MCF 10A (cell line): ENCODE measurements at regions of chr5 and their contacts with region 1.

Region 1: GRCh38 chr5:41835645-41836044 is 34.6 kb downstream of the OXCT1 start:
- DNase-seq: peak; percentile 70
- H3K4me3 Mint-ChIP-seq: no peak overlapping the region
- H3K27ac Mint-ChIP-seq: no peak overlapping the region
- H3K4me1 Mint-ChIP-seq: no peaks in the 10 kb centered on the region
- H3K27me3 Mint-ChIP-seq: no peaks in the 10 kb centered on the region
- CTCF ChIP-seq: no peak

Region 2: GRCh38 chr5:41410737-41411136 is 424.9 kb before region 1 on chr5:
- CTCF ChIA-PET with region 1: interaction called, 10 read pairs
- POLR2A ChIA-PET with region 1: no interaction called
- intact Hi-C with region 1: no loop called
- DNase-seq: no peak
- H3K4me3 Mint-ChIP-seq: no peak overlapping the region
- H3K27ac Mint-ChIP-seq: no peak overlapping the region
- H3K4me1 Mint-ChIP-seq: peaks cover 36% of the 10 kb centered on the region
- H3K27me3 Mint-ChIP-seq: no peaks in the 10 kb centered on the region
- CTCF ChIP-seq: no peak

Region 3: DNA sequence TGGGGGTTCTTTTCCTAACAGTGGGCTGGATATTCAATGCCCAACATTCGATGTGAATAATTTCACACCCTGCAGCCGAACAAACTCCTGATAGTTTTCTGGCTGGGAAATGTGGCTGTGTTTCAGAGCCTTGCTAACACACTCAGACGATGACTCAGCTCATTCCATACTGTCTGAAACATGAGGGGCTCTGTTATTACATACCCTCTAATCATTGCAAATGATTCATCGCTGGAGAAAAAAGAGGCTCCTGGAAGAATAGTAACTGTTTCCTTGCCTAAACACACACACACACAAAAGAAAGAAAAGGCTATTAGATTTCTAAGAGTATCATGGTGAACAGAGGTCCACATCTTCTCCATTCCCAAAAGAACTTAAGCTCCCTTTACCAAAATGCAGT is 41.2 kb before region 1 on chr5:
- CTCF ChIA-PET with region 1: no interaction called
- POLR2A ChIA-PET with region 1: no interaction called
- intact Hi-C with region 1: loop called (anchors 2 kb)
- DNase-seq: peak; percentile 80
- H3K4me3 Mint-ChIP-seq: no peak overlapping the region
- H3K27ac Mint-ChIP-seq: peak overlapping the region; percentile 79
- H3K4me1 Mint-ChIP-seq: peaks cover 21% of the 10 kb centered on the region
- H3K27me3 Mint-ChIP-seq: no peaks in the 10 kb centered on the region
- CTCF ChIP-seq: no peak

Region 4: DNA sequence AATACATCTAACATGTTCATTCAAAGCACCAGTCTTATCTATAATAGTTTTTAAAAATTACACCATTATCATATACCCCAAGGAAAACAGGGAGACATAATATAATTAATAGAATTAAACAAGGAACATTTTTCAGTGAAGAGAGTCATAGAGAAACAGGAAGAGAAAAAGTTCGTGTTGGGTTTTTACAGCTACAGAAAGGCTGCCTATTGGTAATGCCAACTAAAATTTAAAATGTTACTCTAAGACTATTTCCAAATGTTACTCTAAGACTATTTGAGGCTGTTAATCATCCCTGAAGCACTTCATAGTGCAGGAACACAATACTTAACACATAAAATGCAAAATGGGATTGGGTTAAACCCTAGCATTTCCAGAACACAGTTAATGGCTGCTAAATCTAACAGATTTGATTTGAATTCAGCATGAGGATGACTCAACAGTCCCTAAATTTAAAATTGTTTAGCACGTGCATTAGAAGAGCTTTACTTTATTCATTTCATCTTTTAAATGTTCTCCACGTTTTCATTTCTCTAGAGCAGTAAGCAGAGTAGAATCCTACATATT is 19.9 kb before region 1 on chr5:
- CTCF ChIA-PET with region 1: no interaction called
- POLR2A ChIA-PET with region 1: no interaction called
- intact Hi-C with region 1: no loop called
- DNase-seq: no peak
- H3K4me3 Mint-ChIP-seq: no peak overlapping the region
- H3K27ac Mint-ChIP-seq: no peak overlapping the region
- H3K4me1 Mint-ChIP-seq: peaks cover 12% of the 10 kb centered on the region
- H3K27me3 Mint-ChIP-seq: no peaks in the 10 kb centered on the region
- CTCF ChIP-seq: no peak

Region 5: GRCh38 chr5:41967852-41968719 is 132.4 kb after region 1 on chr5:
- CTCF ChIA-PET with region 1: no interaction called
- POLR2A ChIA-PET with region 1: no interaction called
- intact Hi-C with region 1: no loop called
- DNase-seq: no peak
- H3K4me3 Mint-ChIP-seq: no peak overlapping the region
- H3K27ac Mint-ChIP-seq: no peak overlapping the region
- H3K4me1 Mint-ChIP-seq: no peaks in the 10 kb centered on the region
- H3K27me3 Mint-ChIP-seq: no peaks in the 10 kb centered on the region
- CTCF ChIP-seq: peak; percentile 17

Region 6: DNA sequence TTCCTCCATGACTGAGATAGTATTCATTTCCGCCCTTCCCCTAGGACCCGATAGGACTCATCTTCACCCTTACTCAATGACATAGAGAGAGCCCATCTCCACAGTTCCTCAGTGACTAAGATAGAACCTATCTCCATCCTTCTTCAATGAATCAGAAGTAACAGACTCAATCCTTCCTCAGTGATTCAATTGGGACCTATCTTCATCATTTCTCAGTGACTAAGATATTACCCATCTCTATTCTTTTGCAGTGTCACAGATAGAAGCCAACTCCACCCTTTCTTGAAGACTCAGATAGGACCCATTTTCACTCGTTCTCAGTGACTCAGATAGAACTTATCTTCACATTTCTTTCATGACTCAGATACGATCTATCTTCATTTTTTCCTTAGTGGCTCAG is 254.1 kb after region 1 on chr5:
- CTCF ChIA-PET with region 1: no interaction called
- POLR2A ChIA-PET with region 1: no interaction called
- intact Hi-C with region 1: no loop called
- DNase-seq: no peak
- H3K4me3 Mint-ChIP-seq: no peak overlapping the region
- H3K27ac Mint-ChIP-seq: no peak overlapping the region
- H3K4me1 Mint-ChIP-seq: no peaks in the 10 kb centered on the region
- H3K27me3 Mint-ChIP-seq: no peaks in the 10 kb centered on the region
- CTCF ChIP-seq: no peak